ENCODE measurements at regions of chr1 and their contacts with region 1.

Region 1: DNA sequence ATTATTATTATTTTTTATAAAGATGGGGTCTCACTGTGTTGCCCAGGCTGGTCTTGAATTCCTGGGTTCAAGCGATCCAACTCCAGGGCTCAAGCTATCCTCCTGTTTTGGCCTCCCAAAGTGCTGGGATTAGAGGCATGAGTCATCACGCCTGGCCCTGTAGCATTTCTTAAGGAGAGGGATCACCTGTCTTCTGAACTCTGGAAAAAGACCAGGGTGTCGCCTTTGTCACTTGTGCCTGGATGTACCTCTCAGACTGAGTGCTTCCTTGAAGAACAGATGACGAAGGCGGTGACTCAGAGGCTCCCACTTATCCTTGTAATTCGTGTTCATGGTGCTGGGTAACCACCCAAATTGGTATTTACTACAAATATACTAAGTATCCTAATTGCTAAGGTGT is 2.4 kb upstream of the CGN start:
- DNase-seq: no peak
- ATAC-seq: no peak

Region 2: GRCh38 chr1:151346769-151347522 is 161.9 kb before region 1 on chr1 and contains the start of gene RFX5:
- intact Hi-C with region 1: no loop called
- DNase-seq: peak; percentile 95
- ATAC-seq: peak; percentile 98
- total RNA-seq, gene RFX5: 23.1 to 23.8 TPM

Region 3: DNA sequence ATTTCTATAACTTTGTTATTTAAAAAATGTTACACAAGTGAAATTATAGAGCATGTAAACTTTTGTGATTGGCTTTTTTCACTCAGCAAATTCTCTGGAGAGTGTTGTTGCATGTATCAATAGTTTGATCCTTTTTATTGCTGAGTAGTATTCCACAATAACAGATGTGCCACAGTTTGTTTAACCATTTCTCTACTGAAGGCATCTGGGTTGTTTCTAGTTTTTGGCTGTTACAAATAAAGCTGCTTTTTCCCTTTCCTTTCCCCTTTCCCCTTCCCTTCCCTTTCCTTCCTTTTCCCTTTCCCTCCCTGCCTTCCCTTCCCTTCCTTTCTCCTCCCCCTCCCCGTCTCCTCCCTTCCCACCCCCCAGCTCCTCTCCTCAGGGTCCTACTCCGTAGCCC is 47.2 kb after region 1 on chr1:
- intact Hi-C with region 1: loop called in 1 of 2 experiments (anchors 5 kb)
- DNase-seq: no peak
- ATAC-seq: no peak

Measured in left cardiac atrium (tissue), 4 donors.